ENCODE measurements at regions of chr6 and their contacts with region 1.

Region 1: GRCh38 chr6:118408863-118409262 is 139.2 kb upstream of the PLN start:
- DNase-seq: peak; percentile 22 to 50 (median 37)
- ATAC-seq: peak; percentile 98
- H3K4me3 ChIP-seq: no peak overlapping the region
- H3K27ac ChIP-seq: no peak overlapping the region
- H3K4me1 ChIP-seq: no peaks in the 10 kb centered on the region
- H3K27me3 ChIP-seq: no peaks in the 10 kb centered on the region; a peak in 1 of 5 replicates
- CTCF ChIP-seq: peak; percentile 57 to 98 (median 76)
- EP300 ChIP-seq: no peak
- POLR2A ChIP-seq: no peak
- RAD21 ChIP-seq: peak in 1 of 2 experiments; percentile 58; a peak in 2 of 4 replicates

Region 2: DNA sequence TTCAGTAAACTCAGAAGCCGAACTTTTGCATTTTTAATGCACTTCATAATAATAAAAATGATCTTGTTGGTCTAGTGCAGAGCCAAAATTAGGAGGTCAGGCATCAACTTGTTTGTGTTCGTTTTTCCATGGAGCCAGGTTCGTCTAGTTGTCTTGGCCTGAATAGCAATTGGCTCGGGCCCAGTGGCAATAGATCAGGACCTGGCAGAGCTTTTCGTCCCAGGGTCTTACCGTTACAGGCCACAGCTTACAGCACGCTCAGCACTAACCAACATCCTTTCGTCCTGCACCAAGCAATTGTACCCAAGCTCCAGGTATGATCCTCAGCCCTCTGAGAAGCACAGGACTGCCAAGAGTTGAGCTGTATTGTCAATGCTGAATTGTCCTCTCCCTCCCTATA is 101.3 kb before region 1 on chr6:
- CTCF ChIA-PET with region 1: no interaction called
- POLR2A ChIA-PET with region 1: no interaction called
- in situ Hi-C with region 1: no loop called
- intact Hi-C with region 1: no loop called
- DNase-seq: no peak
- ATAC-seq: no peak
- H3K4me3 ChIP-seq: no peak overlapping the region
- H3K27ac ChIP-seq: no peak overlapping the region
- H3K4me1 ChIP-seq: no peaks in the 10 kb centered on the region
- H3K27me3 ChIP-seq: peaks cover 2 to 3% of the 10 kb centered on the region in 2 experiments; a peak in 1 of 5 replicates
- CTCF ChIP-seq: no peak
- EP300 ChIP-seq: no peak
- POLR2A ChIP-seq: no peak
- RAD21 ChIP-seq: no peak

Region 3: GRCh38 chr6:118509009-118509617 is 100.2 kb after region 1 on chr6:
- CTCF ChIA-PET with region 1: no interaction called
- POLR2A ChIA-PET with region 1: no interaction called
- in situ Hi-C with region 1: no loop called
- intact Hi-C with region 1: loop called (anchors 5 kb)
- DNase-seq: peak in 3 of 4 experiments; percentile 11 to 41 (median 16)
- ATAC-seq: no peak
- H3K4me3 ChIP-seq: no peak overlapping the region
- H3K27ac ChIP-seq: no peak overlapping the region
- H3K4me1 ChIP-seq: peaks cover 3 to 10% of the 10 kb centered on the region in 2 experiments; a peak in 2 of 5 replicates
- H3K27me3 ChIP-seq: no peaks in the 10 kb centered on the region
- CTCF ChIP-seq: peak; percentile 47 to 66 (median 60); a peak in 5 of 6 replicates
- EP300 ChIP-seq: no peak
- POLR2A ChIP-seq: no peak
- RAD21 ChIP-seq: peak; percentile 54 to 63